Motor neuron (in vitro differentiated cells): ENCODE measurements at regions of chr3 and their contacts with region 1.

Region 1: GRCh38 chr3:8416965-8417364 is 84.7 kb upstream of the LMCD1 start:
- ATAC-seq: peak in 3 of 8 experiments; percentile 87 to 93 (median 90)
- H3K4me3 ChIP-seq: no peak overlapping the region
- H3K27ac ChIP-seq: no peak overlapping the region
- H3K4me1 ChIP-seq: no peaks in the 10 kb centered on the region

Region 2: DNA sequence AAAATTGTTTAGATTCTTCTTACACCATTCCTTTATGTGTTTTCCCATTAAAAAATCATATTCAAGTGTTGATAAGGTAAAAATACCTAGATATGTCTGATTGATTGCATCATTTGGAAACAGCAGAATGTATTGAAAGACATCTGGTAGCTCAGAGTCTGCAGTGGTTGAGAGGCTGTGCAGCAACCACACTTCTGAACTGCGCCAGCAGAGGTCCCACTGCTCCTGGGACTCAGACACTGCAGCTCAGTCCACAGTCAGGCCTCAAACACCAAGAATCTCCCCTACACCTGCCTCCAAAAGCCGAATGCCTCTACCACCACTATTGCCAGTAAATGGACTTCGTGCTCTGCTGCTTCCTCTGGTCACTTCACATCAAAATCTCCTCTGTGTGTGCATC is 92.2 kb before region 1 on chr3:
- in situ Hi-C with region 1: loop called in 1 of 9 experiments (anchors 10 kb)
- ATAC-seq: peak in 4 of 8 experiments; percentile 30 to 99 (median 91)
- H3K4me3 ChIP-seq: no peak overlapping the region
- H3K27ac ChIP-seq: no peak overlapping the region
- H3K4me1 ChIP-seq: peaks cover 12% of the 10 kb centered on the region in 2 donors

Region 3: GRCh38 chr3:8532251-8532871 is 115.4 kb after region 1 on chr3:
- in situ Hi-C with region 1: no loop called
- ATAC-seq: peak in 3 of 8 experiments; percentile 72 to 75 (median 74)
- H3K4me3 ChIP-seq: no peak overlapping the region
- H3K27ac ChIP-seq: no peak overlapping the region
- H3K4me1 ChIP-seq: peaks cover 43 to 51% of the 10 kb centered on the region in 2 donors